HAP-1 (cell line): ENCODE measurements at regions of chr7 and their contacts with region 1.

Region 1: GRCh38 chr7:116809636-116810266 is 52.6 kb upstream of the CAPZA2 start:
- DNase-seq: peak; percentile 57 to 88
- H3K4me3 ChIP-seq: no peak overlapping the region
- H3K4me1 ChIP-seq: peaks cover 4% of the 10 kb centered on the region
- H3K27me3 ChIP-seq: no peaks in the 10 kb centered on the region

Region 2: GRCh38 chr7:116173051-116174028 is 636.4 kb before region 1 on chr7:
- in situ Hi-C with region 1: loop called (anchors 25 kb)
- DNase-seq: peak; percentile 12 to 66
- H3K4me3 ChIP-seq: no peak overlapping the region
- H3K4me1 ChIP-seq: no peaks in the 10 kb centered on the region
- H3K27me3 ChIP-seq: no peaks in the 10 kb centered on the region; the same call in 1 of the 2 replicates

Region 3: GRCh38 chr7:116259871-116260440 is 549.8 kb before region 1 on chr7:
- in situ Hi-C with region 1: loop called (anchors 10 kb)
- DNase-seq: no peak
- H3K4me3 ChIP-seq: no peak overlapping the region
- H3K4me1 ChIP-seq: no peaks in the 10 kb centered on the region
- H3K27me3 ChIP-seq: no peaks in the 10 kb centered on the region

Region 4: DNA sequence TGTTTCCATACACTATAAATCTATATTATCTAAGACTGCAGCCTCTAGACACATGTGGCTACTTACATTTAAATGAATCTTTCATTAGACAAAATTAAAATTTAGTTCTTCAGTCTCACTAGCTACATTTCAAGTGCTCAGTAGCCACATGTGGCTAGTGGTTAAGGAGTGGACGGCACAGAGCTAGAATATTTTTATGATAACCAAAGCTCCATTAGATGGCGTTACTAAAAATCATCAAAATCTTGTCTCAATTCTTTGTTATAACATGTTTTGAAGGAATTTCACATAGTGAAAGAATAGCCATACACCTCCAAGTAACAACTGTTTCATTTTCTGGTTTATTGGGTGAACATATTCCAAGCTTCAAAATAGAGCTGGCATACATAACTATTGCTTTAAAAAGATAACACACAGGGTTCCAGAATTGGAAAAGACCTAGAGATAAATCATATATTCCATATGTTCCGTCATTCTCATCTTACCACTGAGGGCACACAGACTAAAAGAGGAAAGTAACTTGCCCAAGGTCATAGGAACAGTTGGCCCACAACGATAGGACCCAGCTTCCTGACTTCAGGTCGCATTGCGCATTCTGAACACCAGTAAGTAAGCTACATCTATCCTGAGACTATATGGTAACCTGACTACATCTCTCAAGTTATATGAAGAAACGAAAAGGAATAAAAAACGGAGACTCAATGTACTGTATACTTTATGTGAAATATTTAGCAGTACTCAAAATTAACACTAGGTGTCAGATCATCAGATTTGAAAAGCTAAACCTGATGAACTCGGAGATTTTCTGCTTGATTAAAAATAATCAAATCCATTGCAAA is 218.3 kb before region 1 on chr7:
- in situ Hi-C with region 1: loop called (anchors 5 kb)
- DNase-seq: peak in 1 of 2 experiments; percentile 31
- H3K4me3 ChIP-seq: no peak overlapping the region
- H3K4me1 ChIP-seq: peaks cover 5% of the 10 kb centered on the region
- H3K27me3 ChIP-seq: peaks cover 14% of the 10 kb centered on the region

Region 5: GRCh38 chr7:116671681-116672595 is 137.8 kb before region 1 on chr7 and contains the start of gene MET:
- in situ Hi-C with region 1: loop called (anchors 25 kb)
- DNase-seq: peak; percentile 74 to 83
- H3K4me3 ChIP-seq: peak within 1 kb of the TSS; percentile 46
- H3K4me1 ChIP-seq: peaks cover 15% of the 10 kb centered on the region
- H3K27me3 ChIP-seq: no peaks in the 10 kb centered on the region